Adrenal gland (tissue), 19 donors: ENCODE measurements at regions of chr18 and their contacts with region 1.

Region 1: GRCh38 chr18:6741232-6741663 is 11.7 kb downstream of the ARHGAP28 start:
- DNase-seq: peak; percentile 50 to 76 (median 71)
- H3K4me3 ChIP-seq: no peak overlapping the region
- H3K27ac ChIP-seq: peak overlapping the region in 4 of 5 donors; percentile 39 to 80 (median 63)
- H3K4me1 ChIP-seq: peaks cover 13% of the 10 kb centered on the region in 2 donors
- H3K27me3 ChIP-seq: no peaks in the 10 kb centered on the region
- CTCF ChIP-seq: no peak
- POLR2A ChIP-seq: peak in 1 of 2 donors; percentile 7

Region 2: GRCh38 chr18:6648581-6648980 is 92.7 kb before region 1 on chr18:
- intact Hi-C with region 1: no loop called
- DNase-seq: no peak
- H3K4me3 ChIP-seq: no peak overlapping the region
- H3K27ac ChIP-seq: no peak overlapping the region
- H3K4me1 ChIP-seq: no peaks in the 10 kb centered on the region
- H3K27me3 ChIP-seq: no peaks in the 10 kb centered on the region
- CTCF ChIP-seq: no peak
- POLR2A ChIP-seq: no peak

Region 3: DNA sequence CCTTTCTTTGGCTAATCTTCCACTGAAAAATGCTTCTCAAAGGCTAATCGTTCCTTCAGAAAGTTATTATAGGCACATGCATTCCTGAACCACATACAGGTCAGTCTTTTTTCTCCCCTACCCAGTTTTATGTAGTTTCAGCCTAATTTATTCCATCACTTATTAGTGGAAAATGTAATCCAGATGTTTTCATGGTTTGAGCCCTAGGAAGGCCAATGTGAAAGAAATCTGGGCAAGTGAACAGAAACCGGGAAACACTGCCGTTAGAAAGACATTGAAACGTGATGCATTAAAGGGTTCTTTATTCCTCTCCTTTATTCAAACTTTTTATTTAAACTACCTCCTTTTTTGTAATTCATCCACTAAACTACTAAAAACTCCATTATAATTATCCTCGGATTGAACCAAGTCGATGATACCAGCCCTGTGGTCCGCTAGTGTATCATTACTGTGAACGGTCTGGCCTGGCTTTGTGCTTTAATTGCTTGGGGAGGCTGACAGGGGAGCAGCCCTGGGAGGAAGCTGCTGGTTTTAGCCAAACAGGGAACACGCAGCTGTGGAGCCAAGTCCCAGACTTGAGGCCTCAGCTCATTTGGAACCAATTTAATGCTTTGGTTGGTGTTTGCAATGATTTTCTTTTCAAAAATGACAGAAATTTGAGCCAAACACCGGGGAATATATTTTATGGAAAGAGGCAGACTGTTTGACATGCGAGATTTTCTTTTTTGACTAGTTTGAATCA is 137.5 kb after region 1 on chr18:
- intact Hi-C with region 1: loop called in 1 of 2 experiments (anchors 10 kb)
- DNase-seq: no peak
- H3K4me3 ChIP-seq: no peak overlapping the region
- H3K27ac ChIP-seq: no peak overlapping the region
- H3K4me1 ChIP-seq: peaks cover 0 to 18% of the 10 kb centered on the region in 2 donors
- H3K27me3 ChIP-seq: no peaks in the 10 kb centered on the region
- CTCF ChIP-seq: no peak
- POLR2A ChIP-seq: no peak